Activated CD4-positive, alpha-beta memory T cell treated with anti-CD3 and anti-CD28 coated beads, Interleukin-2, amount 10 ng/mL, durations not matched to agents 7 days and 5 days (primary cell): ENCODE measurements at regions of chr18 and their contacts with region 1.

Region 1: DNA sequence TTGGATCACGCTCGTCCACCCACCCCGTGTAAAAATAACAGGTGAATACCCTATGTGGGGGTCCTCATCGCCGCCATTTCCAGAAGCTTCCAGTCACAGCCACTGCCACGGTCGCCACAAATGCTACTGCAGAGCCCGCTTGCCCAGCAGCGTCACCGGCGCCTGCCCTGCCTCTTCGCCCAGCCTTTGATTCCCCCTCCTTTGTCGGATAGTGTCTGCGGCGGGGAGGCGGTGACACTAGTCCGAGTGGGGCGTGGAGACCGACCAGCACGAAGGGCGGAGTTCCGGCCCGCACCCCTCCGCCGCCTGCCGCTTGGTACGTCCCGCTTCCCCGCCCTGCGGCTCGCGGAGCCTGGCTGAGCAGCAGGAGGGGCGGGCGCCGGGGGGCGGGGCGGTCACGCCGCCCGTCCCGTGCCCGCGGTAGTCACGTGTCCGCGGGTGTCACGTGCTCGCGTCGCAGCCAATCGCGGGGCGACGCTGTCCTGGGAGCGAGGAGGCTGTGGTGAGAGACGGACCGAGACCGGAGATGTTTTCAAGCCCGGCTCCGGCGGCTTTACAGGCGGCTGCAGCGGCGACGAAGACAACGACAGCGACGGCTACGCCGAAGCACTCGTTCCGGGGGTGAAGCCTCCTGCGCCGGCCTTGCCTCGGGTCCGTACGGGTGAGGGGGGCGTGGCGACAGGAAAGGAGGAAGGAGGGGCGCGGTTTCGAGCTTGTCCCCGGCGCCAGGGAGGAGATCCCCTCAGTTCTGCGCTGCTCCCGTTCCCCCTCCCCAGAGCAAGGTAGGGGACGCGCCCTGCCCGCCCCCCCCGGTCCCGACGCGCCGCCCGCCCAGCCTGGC is at the start of gene ANKRD12:
- DNase-seq: peak; percentile 99
- H3K4me3 Mint-ChIP-seq: peak within 1 kb of the TSS; percentile 86
- H3K27ac Mint-ChIP-seq: peak within 1 kb of the TSS; percentile 96
- H3K4me1 Mint-ChIP-seq: peaks cover 60% of the 10 kb centered on the region
- H3K27me3 Mint-ChIP-seq: no peaks in the 10 kb centered on the region
- total RNA-seq, gene ANKRD12: 103 to 111 TPM

Region 2: DNA sequence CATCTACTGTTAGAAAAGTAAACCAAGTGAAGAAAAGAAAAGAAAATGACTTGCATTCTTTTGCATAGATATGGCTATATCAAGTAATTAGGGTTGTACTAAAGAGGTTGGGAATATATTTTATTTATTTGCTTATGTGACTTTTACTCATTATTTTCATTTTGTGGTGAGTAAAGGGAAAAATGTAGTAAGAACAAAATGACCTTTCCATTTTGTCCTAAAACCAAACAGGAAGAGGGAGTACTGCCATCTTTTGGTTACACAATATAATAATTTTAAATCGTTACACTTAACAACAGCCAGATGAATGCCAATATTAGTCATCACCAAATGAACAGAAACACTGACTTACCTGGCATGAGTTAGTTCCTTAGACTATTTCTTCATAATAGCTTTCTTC is 81.3 kb before region 1 on chr18:
- CTCF ChIA-PET with region 1: no interaction called
- POLR2A ChIA-PET with region 1: no interaction called
- DNase-seq: no peak
- H3K4me3 Mint-ChIP-seq: no peak overlapping the region
- H3K27ac Mint-ChIP-seq: no peak overlapping the region
- H3K4me1 Mint-ChIP-seq: peaks cover 6% of the 10 kb centered on the region
- H3K27me3 Mint-ChIP-seq: no peaks in the 10 kb centered on the region

Region 3: GRCh38 chr18:9066817-9067306 is 69.7 kb before region 1 on chr18:
- CTCF ChIA-PET with region 1: interaction called, 4 read pairs
- POLR2A ChIA-PET with region 1: interaction called, 21 read pairs
- DNase-seq: no peak
- H3K4me3 Mint-ChIP-seq: no peak overlapping the region
- H3K27ac Mint-ChIP-seq: peak overlapping the region; percentile 81
- H3K4me1 Mint-ChIP-seq: peaks cover 45% of the 10 kb centered on the region
- H3K27me3 Mint-ChIP-seq: no peaks in the 10 kb centered on the region

Region 4: DNA sequence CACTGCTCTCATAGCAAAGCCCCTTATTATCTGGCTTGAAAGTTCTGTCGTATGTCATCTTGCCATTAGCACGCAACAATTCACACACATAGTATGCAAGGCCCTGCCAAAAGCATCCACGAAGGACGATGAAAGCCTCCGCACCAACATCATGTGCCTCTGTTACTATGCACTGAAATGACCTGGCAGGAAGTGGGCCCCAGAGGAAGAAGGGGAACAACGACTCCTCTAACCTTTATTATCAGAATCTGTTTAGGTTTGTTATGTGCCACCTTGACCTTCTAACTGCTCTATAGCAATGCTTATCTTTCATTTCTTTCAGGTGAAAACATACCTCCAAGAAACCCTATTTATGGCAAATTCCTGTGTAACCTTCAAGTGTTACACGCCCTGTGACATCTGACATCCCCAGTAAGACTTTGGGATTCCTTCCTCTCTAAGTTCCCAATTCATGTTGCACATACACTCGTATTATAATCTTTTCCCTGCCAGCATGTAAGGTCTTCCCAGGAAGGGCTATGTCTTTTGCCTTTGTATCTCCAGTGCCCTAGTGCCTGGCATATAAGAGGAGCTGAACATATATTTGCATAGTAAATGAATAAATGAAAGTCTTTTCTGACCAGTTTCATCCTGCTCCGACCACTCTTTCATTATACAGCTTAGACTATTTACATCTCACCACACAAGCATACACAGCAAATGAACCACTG is 41.1 kb before region 1 on chr18:
- CTCF ChIA-PET with region 1: no interaction called
- POLR2A ChIA-PET with region 1: interaction called, 752 read pairs
- DNase-seq: peak; percentile 77
- H3K4me3 Mint-ChIP-seq: peak overlapping the region; percentile 62
- H3K27ac Mint-ChIP-seq: peak overlapping the region; percentile 98
- H3K4me1 Mint-ChIP-seq: peaks cover 71% of the 10 kb centered on the region
- H3K27me3 Mint-ChIP-seq: no peaks in the 10 kb centered on the region

Region 5: GRCh38 chr18:9117980-9118841 is 18.3 kb before region 1 on chr18:
- CTCF ChIA-PET with region 1: interaction called, 6 read pairs
- POLR2A ChIA-PET with region 1: interaction called, 524 read pairs
- DNase-seq: no peak
- H3K4me3 Mint-ChIP-seq: peak overlapping the region; percentile 50
- H3K27ac Mint-ChIP-seq: peak overlapping the region; percentile 76
- H3K4me1 Mint-ChIP-seq: peaks cover 78% of the 10 kb centered on the region
- H3K27me3 Mint-ChIP-seq: no peaks in the 10 kb centered on the region

Region 6: GRCh38 chr18:9147440-9148202 is 11.1 kb after region 1 on chr18:
- CTCF ChIA-PET with region 1: interaction called, 4 read pairs
- POLR2A ChIA-PET with region 1: interaction called, 43 read pairs
- DNase-seq: peak; percentile 30
- H3K4me3 Mint-ChIP-seq: peak overlapping the region; percentile 26
- H3K27ac Mint-ChIP-seq: peak overlapping the region; percentile 81
- H3K4me1 Mint-ChIP-seq: peaks cover 73% of the 10 kb centered on the region
- H3K27me3 Mint-ChIP-seq: no peaks in the 10 kb centered on the region